ENCODE measurements at regions of chr13 and their contacts with region 1.

Region 1: DNA sequence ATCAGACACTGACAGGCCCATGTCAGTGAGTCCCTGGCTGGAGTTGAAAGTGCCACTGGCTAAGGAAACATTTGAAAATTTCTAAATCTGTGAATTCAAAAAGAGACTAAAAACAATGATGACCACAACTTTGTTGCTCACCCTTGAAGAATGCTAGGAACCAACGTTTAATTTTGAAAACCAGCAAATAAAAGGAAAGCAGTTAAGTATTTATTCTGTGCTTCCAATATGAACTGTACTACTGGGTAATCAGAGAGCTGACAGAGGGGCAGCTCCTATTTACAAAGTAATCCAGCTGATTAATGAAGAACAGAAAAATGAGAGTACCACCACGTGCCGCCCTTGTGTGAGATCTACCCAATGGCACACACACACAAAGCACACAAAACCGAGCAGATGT is 44.7 kb upstream of the LATS2 start:
- DNase-seq: no peak
- ATAC-seq: no peak
- H3K4me3 ChIP-seq: no peak overlapping the region
- H3K4me3 Mint-ChIP-seq: no peak overlapping the region
- H3K27ac ChIP-seq: no peak overlapping the region
- H3K27ac Mint-ChIP-seq: no peak overlapping the region
- H3K4me1 ChIP-seq: no peaks in the 10 kb centered on the region
- H3K4me1 Mint-ChIP-seq: peaks cover 2% of the 10 kb centered on the region
- H3K27me3 ChIP-seq: no peaks in the 10 kb centered on the region
- H3K27me3 Mint-ChIP-seq: peaks cover 2% of the 10 kb centered on the region
- CTCF ChIP-seq: no peak

Region 2: GRCh38 chr13:21176220-21176982 is 70.3 kb after region 1 on chr13 and contains the starts of genes MRPL57 and SKA3:
- CTCF ChIA-PET with region 1: interaction called, 4 read pairs
- POLR2A ChIA-PET with region 1: no interaction called
- intact Hi-C with region 1: loop called (anchors 1 to 2 kb)
- DNase-seq: peak; percentile 86 to 97 (median 93)
- ATAC-seq: peak; percentile 97
- H3K4me3 ChIP-seq: peak within 1 kb of the TSS; percentile 83 to 93
- H3K4me3 Mint-ChIP-seq: peak within 1 kb of the TSS; percentile 97
- H3K27ac ChIP-seq: peak within 1 kb of the TSS; percentile 80 to 92
- H3K27ac Mint-ChIP-seq: peak within 1 kb of the TSS; percentile 96
- H3K4me1 ChIP-seq: peaks cover 18% of the 10 kb centered on the region
- H3K4me1 Mint-ChIP-seq: peaks cover 26% of the 10 kb centered on the region
- H3K27me3 ChIP-seq: no peaks in the 10 kb centered on the region
- H3K27me3 Mint-ChIP-seq: no peaks in the 10 kb centered on the region
- CTCF ChIP-seq: no peak
- total RNA-seq, gene MRPL57: 9.8 to 11.1 TPM
- total RNA-seq, gene SKA3: 0.36 to 0.49 TPM